ENCODE measurements at regions of chr2 and their contacts with region 1.

Region 1: DNA sequence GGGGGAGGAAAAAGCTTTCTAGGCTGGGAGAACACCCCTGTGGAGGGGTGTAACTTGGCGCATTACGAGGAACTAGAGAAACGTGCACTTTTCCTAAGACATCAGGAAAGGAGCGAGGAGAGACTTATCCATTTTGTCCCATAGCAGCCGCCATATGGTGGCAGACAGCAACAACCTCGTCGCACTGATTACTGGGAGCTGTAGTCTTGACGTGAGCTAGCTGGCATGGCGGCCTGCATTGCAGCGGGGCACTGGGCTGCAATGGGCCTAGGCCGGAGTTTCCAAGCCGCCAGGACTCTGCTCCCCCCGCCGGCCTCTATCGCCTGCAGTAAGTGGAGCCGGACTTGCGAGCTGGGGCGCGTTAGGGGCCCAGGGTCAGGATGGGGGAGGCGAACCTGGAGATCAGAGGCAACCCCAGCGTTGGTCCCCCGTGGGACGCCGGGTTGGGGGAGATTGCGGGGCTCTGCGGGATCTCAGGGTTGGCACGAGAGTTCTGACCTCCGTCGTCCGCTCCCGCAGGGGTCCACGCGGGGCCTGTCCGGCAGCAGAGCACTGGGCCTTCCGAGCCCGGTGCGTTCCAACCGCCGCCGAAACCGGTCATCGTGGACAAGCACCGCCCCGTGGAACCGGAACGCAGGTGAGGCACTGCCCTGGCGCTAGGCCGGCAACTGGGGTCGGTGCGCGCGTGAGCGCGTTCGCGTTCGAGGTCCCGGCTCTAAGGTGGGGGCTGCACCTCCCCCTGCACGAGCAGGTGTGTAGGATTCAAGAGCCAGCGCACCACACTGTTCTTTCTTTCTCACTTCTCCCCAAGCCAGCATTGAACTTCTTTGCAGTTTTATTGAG is at the start of gene MRPL19:
- ATAC-seq: peak; percentile 97 to 99 (median 98)
- H3K4me3 ChIP-seq: peak within 1 kb of the TSS; percentile 83 to 97 (median 93)
- H3K27ac ChIP-seq: peak within 1 kb of the TSS; percentile 77 to 87
- H3K4me1 ChIP-seq: peaks cover 0 to 3% of the 10 kb centered on the region in 2 donors
- total RNA-seq, gene MRPL19: 22.2 to 66.5 (median 32.6) TPM

Region 2: GRCh38 chr2:74690571-74690970 is 956.2 kb before region 1 on chr2:
- in situ Hi-C with region 1: loop called in 1 of 9 experiments (anchors 25 kb)
- ATAC-seq: peak in 6 of 8 experiments; percentile 37 to 93 (median 76)
- H3K4me3 ChIP-seq: no peak overlapping the region
- H3K27ac ChIP-seq: no peak overlapping the region
- H3K4me1 ChIP-seq: no peaks in the 10 kb centered on the region

Region 3: DNA sequence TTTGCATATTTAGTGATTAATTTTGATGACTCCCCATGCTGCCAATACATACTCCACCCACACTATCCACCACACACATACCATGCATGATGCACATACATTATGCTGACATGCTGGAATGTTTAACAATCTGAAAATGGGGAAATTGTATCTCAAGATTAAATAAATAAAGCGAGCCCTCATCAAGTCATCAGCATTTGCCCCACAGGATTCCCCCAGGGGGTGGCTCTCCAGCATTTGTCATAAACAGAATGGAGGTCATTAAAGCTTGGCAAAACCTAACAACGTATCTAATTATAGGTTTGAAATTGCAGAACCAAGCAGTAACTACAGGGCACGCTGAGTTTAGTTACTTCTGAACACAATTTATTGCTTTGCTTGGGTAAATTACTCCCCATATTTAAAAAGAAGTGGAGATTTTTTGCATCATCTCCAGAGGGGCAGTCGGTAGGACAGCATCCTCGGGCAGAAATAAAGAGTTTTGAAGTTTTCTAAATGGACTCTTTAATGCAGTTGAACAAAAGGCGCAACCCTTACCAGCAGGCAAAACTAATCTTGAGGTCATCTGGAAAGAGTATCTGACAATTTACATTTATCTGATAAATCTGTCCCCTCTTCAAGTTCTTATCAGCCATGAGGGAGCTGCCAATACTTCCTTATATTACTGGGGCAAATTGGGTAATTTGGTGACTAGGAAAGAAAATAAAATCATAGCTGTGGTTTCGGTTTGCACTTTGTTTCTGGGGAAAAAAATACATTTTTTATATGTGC is 306.1 kb before region 1 on chr2:
- in situ Hi-C with region 1: no loop called
- ATAC-seq: peak in 4 of 8 experiments; percentile 19 to 95 (median 93)
- H3K4me3 ChIP-seq: no peak overlapping the region
- H3K27ac ChIP-seq: no peak overlapping the region
- H3K4me1 ChIP-seq: peaks cover 10 to 40% of the 10 kb centered on the region in 2 donors

Measured in motor neuron (in vitro differentiated cells).